ENCODE measurements at regions of chr6 and their contacts with region 1.

Region 1: DNA sequence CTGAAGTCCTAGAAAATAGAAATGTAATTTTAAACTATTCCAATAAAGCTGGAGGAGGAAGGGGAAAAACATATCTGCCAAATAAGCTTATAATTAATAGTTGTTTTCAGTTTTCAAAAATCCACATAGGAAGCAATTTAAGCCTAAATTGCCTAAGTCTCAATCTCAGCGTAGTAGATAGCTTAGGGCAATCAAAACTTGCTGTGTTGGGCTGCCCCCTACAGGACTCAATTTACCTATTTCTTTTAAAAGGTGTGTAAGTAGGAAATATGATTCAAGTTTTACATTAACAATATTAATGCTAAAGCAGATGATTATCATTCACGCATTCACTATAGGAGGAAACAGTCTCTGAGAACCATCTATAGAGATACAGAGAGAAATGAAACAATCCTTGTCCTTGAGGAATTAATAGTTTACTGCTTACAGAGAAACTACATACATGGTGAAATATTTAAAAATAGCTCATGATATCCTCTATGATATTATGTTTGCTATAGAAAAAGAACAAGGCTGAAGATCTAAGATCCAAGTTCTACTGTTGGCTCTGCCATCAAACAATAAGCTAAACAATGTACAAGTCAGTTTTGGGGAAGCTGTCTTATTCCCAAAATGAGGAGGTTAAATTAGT is 102.1 kb downstream of the ATG5 start:
- DNase-seq: peak; percentile 92
- ATAC-seq: peak; percentile 76
- H3K4me3 Mint-ChIP-seq: no peak overlapping the region
- H3K27ac Mint-ChIP-seq: no peak overlapping the region
- H3K4me1 Mint-ChIP-seq: peaks cover 16% of the 10 kb centered on the region
- H3K27me3 Mint-ChIP-seq: no peaks in the 10 kb centered on the region
- CTCF ChIP-seq: peak; percentile 89

Region 2: GRCh38 chr6:105431226-105431625 is 792.2 kb before region 1 on chr6:
- CTCF ChIA-PET with region 1: interaction called, 13 read pairs
- POLR2A ChIA-PET with region 1: interaction called, 4 read pairs
- intact Hi-C with region 1: loop called (anchors 10 kb)
- DNase-seq: no peak
- ATAC-seq: no peak
- H3K4me3 Mint-ChIP-seq: no peak overlapping the region
- H3K27ac Mint-ChIP-seq: no peak overlapping the region
- H3K4me1 Mint-ChIP-seq: peaks cover 2% of the 10 kb centered on the region
- H3K27me3 Mint-ChIP-seq: peaks cover 3% of the 10 kb centered on the region
- CTCF ChIP-seq: peak; percentile 81

Region 3: GRCh38 chr6:105733565-105734162 is 489.8 kb before region 1 on chr6:
- CTCF ChIA-PET with region 1: interaction called, 8 read pairs
- POLR2A ChIA-PET with region 1: no interaction called
- intact Hi-C with region 1: loop called (anchors 10 kb)
- DNase-seq: no peak
- ATAC-seq: no peak
- H3K4me3 Mint-ChIP-seq: no peak overlapping the region
- H3K27ac Mint-ChIP-seq: no peak overlapping the region
- H3K4me1 Mint-ChIP-seq: peaks cover 2% of the 10 kb centered on the region
- H3K27me3 Mint-ChIP-seq: peaks cover 2% of the 10 kb centered on the region
- CTCF ChIP-seq: peak; percentile 81

Region 4: DNA sequence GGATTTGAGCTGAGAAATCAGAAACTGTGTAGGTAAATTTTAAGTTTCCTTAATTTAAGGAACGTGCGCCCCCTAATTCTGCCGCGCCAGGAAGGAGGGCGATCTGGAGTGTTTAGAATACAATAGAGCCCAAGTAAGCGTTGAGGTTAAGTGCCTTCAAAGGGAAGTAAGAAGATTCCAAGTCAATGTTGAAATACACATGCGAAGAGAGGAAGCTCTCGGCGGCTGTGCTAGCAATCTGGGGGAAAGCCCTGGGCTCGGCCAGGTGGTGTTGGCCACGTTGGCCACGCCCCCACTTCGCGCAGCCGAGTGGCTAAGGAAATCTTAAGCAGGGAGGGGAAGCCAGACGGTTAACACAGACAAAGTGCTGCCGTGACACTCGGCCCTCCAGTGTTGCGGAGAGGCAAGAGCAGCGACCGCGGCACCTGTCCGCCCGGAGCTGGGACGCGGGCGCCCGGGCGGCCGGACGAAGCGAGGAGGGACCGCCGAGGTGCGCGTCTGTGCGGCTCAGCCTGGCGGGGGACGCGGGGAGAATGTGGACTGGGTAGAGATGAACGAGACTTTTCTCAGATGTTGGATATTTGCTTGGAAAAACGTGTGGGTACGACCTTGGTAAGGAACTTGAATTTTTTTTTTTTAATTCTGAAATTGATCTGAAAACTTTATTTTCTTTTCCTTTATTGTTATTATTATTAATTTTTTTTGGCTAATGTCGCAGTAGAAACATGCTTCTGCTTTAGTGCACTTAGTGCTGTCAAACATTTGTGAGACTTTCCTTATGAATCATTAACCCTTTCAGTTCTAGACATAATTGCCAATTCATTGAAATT is 137.2 kb before region 1 on chr6 and contains the start of gene PRDM1:
- CTCF ChIA-PET with region 1: interaction called, 63 read pairs
- POLR2A ChIA-PET with region 1: no interaction called
- intact Hi-C with region 1: loop called (anchors 10 kb)
- DNase-seq: peak; percentile 89
- ATAC-seq: peak; percentile 84
- H3K4me3 Mint-ChIP-seq: peak within 1 kb of the TSS; percentile 78
- H3K27ac Mint-ChIP-seq: peak within 1 kb of the TSS; percentile 75
- H3K4me1 Mint-ChIP-seq: peaks cover 59% of the 10 kb centered on the region
- H3K27me3 Mint-ChIP-seq: peaks cover 57% of the 10 kb centered on the region
- CTCF ChIP-seq: peak; percentile 20
- total RNA-seq, gene PRDM1: 24.6 to 24.7 TPM

Region 5: GRCh38 chr6:106141441-106142237 is 81.8 kb before region 1 on chr6:
- CTCF ChIA-PET with region 1: interaction called, 28 read pairs
- POLR2A ChIA-PET with region 1: no interaction called
- intact Hi-C with region 1: no loop called
- DNase-seq: peak; percentile 96
- ATAC-seq: peak; percentile 89
- H3K4me3 Mint-ChIP-seq: peak overlapping the region; percentile 20
- H3K27ac Mint-ChIP-seq: peak overlapping the region; percentile 96
- H3K4me1 Mint-ChIP-seq: peaks cover 64% of the 10 kb centered on the region
- H3K27me3 Mint-ChIP-seq: peaks cover 2% of the 10 kb centered on the region
- CTCF ChIP-seq: no peak